A549 (cell line): ENCODE measurements at regions of chr16 and their contacts with region 1.

Region 1: GRCh38 chr16:68520649-68521086 is 18.4 kb upstream of the ZFP90 start:
- DNase-seq: peak; percentile 83 to 95
- ATAC-seq: peak; percentile 91 to 96
- H3K4me3 ChIP-seq: peak overlapping the region; percentile 14; the same call in 1 of the 3 replicates
- H3K27ac ChIP-seq: 0 out of 6 replicates have a peak overlapping the region, but pooled peaks of 1 of the 2 experiments have one; percentile 13
- H3K4me1 ChIP-seq: no peaks in the 10 kb centered on the region
- CTCF ChIP-seq: peak; percentile 87
- EP300 ChIP-seq: no peak
- POLR2A ChIP-seq: no peak
- RAD21 ChIP-seq: peak; percentile 49 to 53

Region 2: GRCh38 chr16:68448360-68448970 is 72.2 kb before region 1 on chr16 and contains the start of gene SMPD3:
- CTCF ChIA-PET with region 1: interaction called, 12 read pairs
- POLR2A ChIA-PET with region 1: no interaction called
- DNase-seq: peak; percentile 98 to 99
- ATAC-seq: peak; percentile 95 to 99
- H3K4me3 ChIP-seq: peak within 1 kb of the TSS; percentile 49
- H3K27ac ChIP-seq: peak within 1 kb of the TSS in 1 of 2 experiments; percentile 68; a peak in 4 of 6 replicates
- H3K4me1 ChIP-seq: peaks cover 27% of the 10 kb centered on the region
- CTCF ChIP-seq: no peak
- EP300 ChIP-seq: no peak
- POLR2A ChIP-seq: peak; percentile 39; the same call in 1 of the 2 replicates
- RAD21 ChIP-seq: no peak
- polyA plus RNA-seq, gene SMPD3: 0.04 and 0.07 TPM in 2 replicates

Region 3: DNA sequence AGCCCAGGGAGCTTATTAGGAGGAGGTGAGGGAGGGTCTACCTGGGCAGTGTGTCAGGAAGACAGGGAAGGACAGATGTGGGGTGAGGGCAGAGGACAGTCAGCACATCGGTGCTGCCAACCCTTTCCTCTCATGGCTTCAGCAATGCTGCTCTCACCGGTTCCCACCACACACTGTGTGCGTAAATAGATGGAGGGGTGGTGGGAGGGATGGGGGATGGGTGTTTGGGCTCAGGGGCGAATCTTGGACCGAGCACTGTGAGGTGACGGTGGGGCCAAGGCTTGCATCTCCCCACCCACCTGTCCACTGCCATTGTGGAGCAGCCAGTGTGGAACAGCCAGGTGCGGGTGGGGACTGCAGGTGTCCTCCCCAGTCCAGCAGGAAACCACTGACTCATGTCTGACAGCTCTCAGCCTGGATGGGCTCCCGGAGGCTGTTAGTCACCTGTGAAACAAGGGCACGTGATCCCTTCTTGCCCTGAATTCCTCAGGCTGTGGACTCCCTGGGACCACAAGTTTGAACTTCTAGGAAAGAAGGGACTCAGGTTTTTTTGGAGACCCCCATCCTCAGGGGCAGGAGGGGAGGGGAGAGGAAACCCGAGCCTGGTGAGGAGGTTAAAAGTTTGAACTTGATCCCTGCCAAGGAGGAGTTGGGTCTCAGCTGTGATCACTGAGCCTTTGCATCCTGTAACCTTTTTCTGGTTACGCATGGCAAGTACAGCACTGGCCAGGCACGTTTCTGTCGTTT is 29.7 kb before region 1 on chr16:
- CTCF ChIA-PET with region 1: interaction called, 18 read pairs
- POLR2A ChIA-PET with region 1: no interaction called
- DNase-seq: peak; percentile 27 to 62
- ATAC-seq: peak; percentile 77 to 83
- H3K4me3 ChIP-seq: no peak overlapping the region
- H3K27ac ChIP-seq: peak overlapping the region in 1 of 2 experiments; percentile 6; a peak in 1 of 6 replicates
- H3K4me1 ChIP-seq: peaks cover 11% of the 10 kb centered on the region; the same call in 1 of the 3 replicates
- CTCF ChIP-seq: no peak
- EP300 ChIP-seq: no peak
- POLR2A ChIP-seq: no peak
- RAD21 ChIP-seq: no peak

Region 4: DNA sequence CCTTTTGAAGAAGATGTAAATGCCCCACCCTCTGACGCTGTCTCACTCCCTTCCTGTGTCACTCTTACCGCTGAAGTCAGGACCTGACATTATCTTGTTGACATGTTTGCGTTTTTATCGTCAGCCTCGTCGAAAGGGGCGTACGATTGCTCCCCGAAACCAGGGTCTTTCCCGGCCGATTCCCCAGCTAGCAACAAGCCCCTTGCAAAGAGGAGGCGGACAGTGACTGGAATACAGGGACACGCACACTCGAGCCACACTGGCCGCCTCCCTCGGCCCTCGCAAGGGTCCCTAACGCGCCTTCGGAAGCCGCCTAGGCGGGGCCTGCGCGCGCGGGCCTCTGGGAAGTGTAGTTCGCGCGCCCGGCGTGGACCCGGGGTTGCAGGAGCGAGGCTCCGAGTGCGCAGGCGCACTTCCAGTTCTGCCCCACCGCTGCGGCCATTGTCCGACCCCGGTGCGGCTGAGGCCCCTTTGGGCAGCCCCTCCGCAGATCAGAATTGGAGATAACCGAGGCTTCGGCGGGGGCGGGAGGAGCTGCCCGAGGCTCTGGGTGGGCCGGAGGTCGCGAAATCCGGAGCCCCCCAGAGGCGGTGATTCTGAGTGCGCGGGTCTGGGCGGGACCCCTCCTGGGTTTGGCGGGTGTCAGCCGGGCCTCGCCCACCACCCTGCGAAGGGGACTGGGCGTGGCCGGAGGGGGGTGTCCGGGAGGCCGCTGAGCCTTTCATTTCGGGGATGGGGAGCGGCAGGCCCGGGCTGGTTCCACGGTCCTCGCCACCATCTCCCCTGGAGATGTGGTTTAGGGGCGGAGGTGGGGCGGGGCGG is 18.4 kb after region 1 on chr16 and contains the start of gene ZFP90:
- CTCF ChIA-PET with region 1: interaction called, 12 read pairs
- POLR2A ChIA-PET with region 1: no interaction called
- DNase-seq: peak; percentile 90 to 96
- ATAC-seq: peak; percentile 96 to 99
- H3K4me3 ChIP-seq: peak within 1 kb of the TSS; percentile 84
- H3K27ac ChIP-seq: peak within 1 kb of the TSS; percentile 88
- H3K4me1 ChIP-seq: peaks cover 5% of the 10 kb centered on the region; the same call in 1 of the 3 replicates
- CTCF ChIP-seq: no peak
- EP300 ChIP-seq: no peak
- POLR2A ChIP-seq: peak; percentile 56
- RAD21 ChIP-seq: no peak
- polyA plus RNA-seq, gene ZFP90: 21.6 and 31.9 TPM in 2 replicates

Region 5: DNA sequence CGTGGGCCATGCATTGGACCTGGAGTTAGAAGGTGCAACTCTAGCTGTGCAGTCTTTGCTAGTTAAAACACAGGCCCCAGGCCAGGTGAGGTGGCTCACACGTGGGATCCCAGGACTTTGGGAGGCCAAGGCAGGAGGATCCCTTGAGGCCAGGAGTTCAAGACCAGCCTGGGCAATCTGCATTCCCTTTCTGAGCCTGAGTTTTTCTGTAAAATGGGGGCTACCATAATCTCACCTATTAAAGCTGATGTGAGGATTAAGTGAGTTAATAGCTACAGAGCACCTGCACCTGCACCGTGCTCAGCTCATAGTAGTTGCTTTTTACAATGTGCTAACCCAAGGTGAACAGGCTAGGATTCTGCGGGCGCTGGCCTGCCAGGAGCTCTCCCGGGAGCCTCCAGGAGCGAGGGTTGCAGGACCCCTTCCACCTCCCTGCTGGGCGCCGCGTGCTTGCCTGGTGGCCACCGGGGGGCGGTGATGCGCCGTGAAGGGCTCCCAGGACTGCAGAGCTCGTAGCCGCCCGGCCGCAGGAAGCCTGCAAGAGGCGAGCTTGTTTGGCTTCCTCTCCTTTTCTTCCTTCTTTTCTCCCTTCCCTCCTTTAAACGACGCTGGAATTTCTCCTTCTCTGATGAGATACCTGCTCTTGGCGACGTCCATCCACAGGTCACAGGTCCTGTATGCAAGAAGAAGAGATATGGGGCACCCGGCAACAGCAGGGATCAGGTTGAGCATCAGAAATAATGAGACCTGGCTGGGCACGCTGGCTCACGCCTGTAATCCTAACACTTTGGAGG is 69.7 kb after region 1 on chr16:
- CTCF ChIA-PET with region 1: interaction called, 11 read pairs
- POLR2A ChIA-PET with region 1: no interaction called
- DNase-seq: peak; percentile 48 to 71
- ATAC-seq: peak; percentile 86 to 100
- H3K4me3 ChIP-seq: no peak overlapping the region
- H3K27ac ChIP-seq: no peak overlapping the region
- H3K4me1 ChIP-seq: no peaks in the 10 kb centered on the region
- CTCF ChIP-seq: peak; percentile 54
- EP300 ChIP-seq: no peak
- POLR2A ChIP-seq: no peak
- RAD21 ChIP-seq: peak; percentile 83